Sigmoid colon (tissue), 7 donors: ENCODE measurements at regions of chr22 and their contacts with region 1.

Region 1: GRCh38 chr22:42180349-42180842 is 49.8 kb upstream of the CYP2D6 start:
- DNase-seq: peak; percentile 93
- H3K4me3 ChIP-seq: no peak overlapping the region
- H3K27ac ChIP-seq: peak overlapping the region in 3 of 4 donors; percentile 37 to 59 (median 55)
- H3K4me1 ChIP-seq: peaks cover 0 to 26% (median 12%) of the 10 kb centered on the region in 4 donors
- H3K27me3 ChIP-seq: no peaks in the 10 kb centered on the region
- CTCF ChIP-seq: no peak
- EP300 ChIP-seq: no peak
- POLR2A ChIP-seq: no peak

Region 2: DNA sequence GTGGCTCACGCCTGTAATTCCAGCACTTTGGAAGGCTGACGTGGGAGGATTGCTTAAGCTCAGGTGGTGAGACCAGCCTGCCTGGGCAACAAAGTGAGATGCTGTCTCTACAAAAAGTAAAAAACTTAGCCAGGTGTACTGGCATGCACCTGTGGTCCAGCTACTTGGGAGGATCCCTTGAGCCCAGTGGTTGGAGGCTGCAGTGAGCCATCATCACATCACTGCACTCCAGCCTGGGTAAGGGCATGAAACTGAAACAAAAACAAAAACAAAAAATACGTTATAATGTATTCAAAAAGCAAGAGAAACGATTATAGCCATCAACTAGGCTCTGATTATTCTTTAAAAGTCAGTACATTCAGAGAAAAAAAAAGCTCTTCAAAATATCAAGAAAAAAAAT is 27.5 kb after region 1 on chr22:
- intact Hi-C with region 1: loop called (anchors 2 kb)
- DNase-seq: no peak
- H3K4me3 ChIP-seq: no peak overlapping the region
- H3K27ac ChIP-seq: no peak overlapping the region
- H3K4me1 ChIP-seq: no peaks in the 10 kb centered on the region
- H3K27me3 ChIP-seq: no peaks in the 10 kb centered on the region
- CTCF ChIP-seq: no peak
- EP300 ChIP-seq: no peak
- POLR2A ChIP-seq: no peak